Activated B cell treated with CpG ODN at 0.5 μM for 24 hours (primary cell): ENCODE measurements at regions of chr2 and their contacts with region 1.

Region 1: GRCh38 chr2:102615622-102616436 is 3.5 kb upstream of the SLC9A2 start:
- DNase-seq: no peak
- ATAC-seq: peak; percentile 76
- H3K4me3 Mint-ChIP-seq: no peak overlapping the region
- H3K27ac Mint-ChIP-seq: no peak overlapping the region
- H3K4me1 Mint-ChIP-seq: peaks cover 7% of the 10 kb centered on the region
- H3K27me3 Mint-ChIP-seq: peaks cover 42% of the 10 kb centered on the region
- CTCF ChIP-seq: peak; percentile 77

Region 2: GRCh38 chr2:102520028-102520427 is 95.8 kb before region 1 on chr2:
- CTCF ChIA-PET with region 1: no interaction called
- POLR2A ChIA-PET with region 1: no interaction called
- intact Hi-C with region 1: loop called (anchors 1 kb)
- DNase-seq: no peak
- ATAC-seq: peak; percentile 45
- H3K4me3 Mint-ChIP-seq: no peak overlapping the region
- H3K27ac Mint-ChIP-seq: no peak overlapping the region
- H3K4me1 Mint-ChIP-seq: no peaks in the 10 kb centered on the region
- H3K27me3 Mint-ChIP-seq: peaks cover 4% of the 10 kb centered on the region
- CTCF ChIP-seq: no peak